ENCODE measurements at regions of chr2 and their contacts with region 1.

Region 1: GRCh38 chr2:127064642-127065250 is 42.2 kb downstream of the BIN1 start:
- DNase-seq: no peak
- ATAC-seq: peak; percentile 89
- H3K4me3 ChIP-seq: no peak overlapping the region
- H3K27ac ChIP-seq: peak overlapping the region; percentile 55; the same call in 1 of the 2 replicates
- H3K4me1 ChIP-seq: peaks cover 11% of the 10 kb centered on the region
- H3K27me3 ChIP-seq: no peaks in the 10 kb centered on the region
- CTCF ChIP-seq: peak in 1 of 3 experiments; percentile 26; a peak in 2 of 6 replicates
- EP300 ChIP-seq: no peak
- POLR2A ChIP-seq: peak; percentile 62
- RAD21 ChIP-seq: 0 out of 2 replicates have a peak, but pooled peaks have one; percentile 3

Region 2: DNA sequence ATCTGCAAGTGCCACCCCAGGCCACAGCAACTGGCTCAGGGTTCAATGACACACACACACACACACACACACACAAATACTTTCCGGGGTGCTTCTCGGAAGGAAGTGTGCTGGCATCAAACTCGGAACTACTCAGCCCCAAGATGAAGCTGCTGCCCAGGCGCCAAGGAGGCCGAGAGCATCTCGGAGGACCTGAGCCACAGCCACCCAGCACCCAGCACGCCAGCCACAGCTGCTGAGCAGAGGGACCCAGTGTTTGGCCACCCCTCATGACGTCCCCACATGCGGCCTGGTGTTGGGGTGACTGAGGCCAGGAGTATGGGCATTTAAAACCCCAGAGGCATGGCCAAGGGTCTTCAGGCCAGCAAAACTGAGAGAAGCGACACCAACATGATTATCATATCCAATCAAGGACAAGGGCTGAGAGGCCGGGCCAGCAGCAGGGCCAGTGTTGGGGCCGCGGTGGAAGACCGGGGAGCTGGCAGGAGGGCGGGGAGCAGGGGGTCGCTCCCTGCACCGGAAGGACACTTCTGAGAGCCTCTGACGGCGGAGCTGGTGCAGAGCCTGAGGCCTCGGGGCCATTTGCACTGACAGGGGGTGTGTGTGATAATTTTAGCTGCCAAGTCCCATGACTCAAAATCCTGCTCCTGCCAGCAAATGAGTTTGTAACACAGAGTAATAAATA is 19.6 kb before region 1 on chr2:
- CTCF ChIA-PET with region 1: no interaction called
- POLR2A ChIA-PET with region 1: no interaction called
- RAD21 ChIA-PET with region 1: no interaction called
- SMC1A ChIA-PET with region 1: no interaction called
- in situ Hi-C with region 1: no loop called
- intact Hi-C with region 1: no loop called
- DNase-seq: no peak
- ATAC-seq: no peak
- H3K4me3 ChIP-seq: no peak overlapping the region
- H3K27ac ChIP-seq: no peak overlapping the region
- H3K4me1 ChIP-seq: peaks cover under 1% of the 10 kb centered on the region
- H3K27me3 ChIP-seq: no peaks in the 10 kb centered on the region
- CTCF ChIP-seq: no peak
- EP300 ChIP-seq: no peak
- POLR2A ChIP-seq: no peak
- RAD21 ChIP-seq: no peak

Region 3: DNA sequence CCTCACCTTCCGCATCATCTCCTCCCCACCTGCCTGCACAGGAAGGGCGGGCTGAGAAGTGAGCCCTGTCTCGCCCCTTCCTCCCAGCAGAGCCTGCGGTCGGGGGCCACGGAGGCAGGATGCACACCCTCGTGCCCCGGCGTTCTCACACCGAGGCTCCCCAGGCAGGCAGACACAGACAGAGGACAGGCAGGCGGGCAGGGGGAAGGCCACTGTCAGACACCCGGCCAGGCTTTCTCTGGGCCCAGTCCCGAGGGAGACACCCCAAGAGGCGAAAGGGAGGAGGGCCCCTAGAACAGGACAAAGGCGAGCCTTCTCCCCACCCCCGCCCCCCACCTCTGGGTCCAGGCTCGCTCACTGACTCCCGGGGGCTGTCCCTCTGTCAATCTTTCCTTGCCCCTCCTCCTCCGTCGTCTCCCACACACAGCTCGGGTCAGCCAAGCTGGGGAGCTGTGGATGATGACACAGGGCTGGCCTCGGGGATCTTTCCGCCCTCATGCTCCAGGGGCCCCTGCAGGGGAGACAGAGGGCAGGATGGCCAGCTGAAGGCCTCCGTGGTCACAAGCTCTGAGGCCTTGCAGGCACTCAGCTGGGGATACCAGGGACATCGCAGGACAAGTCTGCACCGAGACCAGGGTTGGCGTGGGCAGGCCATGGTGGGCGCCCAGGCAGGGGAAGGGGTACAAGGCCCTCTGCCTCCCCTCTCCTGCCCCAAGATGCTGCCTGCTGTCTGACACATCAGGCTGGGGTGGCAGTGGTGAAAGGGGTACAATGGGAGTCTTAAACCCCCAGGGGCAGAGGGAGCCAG is 17.3 kb after region 1 on chr2:
- CTCF ChIA-PET with region 1: interaction called, 20 read pairs
- POLR2A ChIA-PET with region 1: no interaction called
- RAD21 ChIA-PET with region 1: interaction called, 22 read pairs
- SMC1A ChIA-PET with region 1: interaction called, 14 read pairs
- in situ Hi-C with region 1: no loop called
- intact Hi-C with region 1: no loop called
- DNase-seq: no peak
- ATAC-seq: peak; percentile 65
- H3K4me3 ChIP-seq: peak overlapping the region; percentile 60
- H3K27ac ChIP-seq: peak overlapping the region; percentile 75
- H3K4me1 ChIP-seq: peaks cover 47% of the 10 kb centered on the region
- H3K27me3 ChIP-seq: no peaks in the 10 kb centered on the region
- CTCF ChIP-seq: no peak
- EP300 ChIP-seq: 0 out of 4 replicates have a peak, but pooled peaks of 1 of the 2 experiments have one; percentile 4
- POLR2A ChIP-seq: peak; percentile 83
- RAD21 ChIP-seq: no peak

Region 4: GRCh38 chr2:127157651-127158470 is 93.1 kb after region 1 on chr2:
- CTCF ChIA-PET with region 1: interaction called, 3 read pairs
- POLR2A ChIA-PET with region 1: no interaction called
- RAD21 ChIA-PET with region 1: interaction called, 5 read pairs
- SMC1A ChIA-PET with region 1: no interaction called
- in situ Hi-C with region 1: no loop called
- intact Hi-C with region 1: loop called (anchors 5 kb)
- DNase-seq: no peak
- ATAC-seq: peak; percentile 63
- H3K4me3 ChIP-seq: no peak overlapping the region
- H3K27ac ChIP-seq: no peak overlapping the region
- H3K4me1 ChIP-seq: no peaks in the 10 kb centered on the region
- H3K27me3 ChIP-seq: no peaks in the 10 kb centered on the region; a peak in 1 of 4 replicates
- CTCF ChIP-seq: no peak
- EP300 ChIP-seq: no peak
- POLR2A ChIP-seq: no peak
- RAD21 ChIP-seq: no peak

Region 5: GRCh38 chr2:127174136-127174535 is 109.4 kb after region 1 on chr2:
- CTCF ChIA-PET with region 1: interaction called, 35 read pairs
- POLR2A ChIA-PET with region 1: no interaction called
- RAD21 ChIA-PET with region 1: interaction called, 11 read pairs
- SMC1A ChIA-PET with region 1: interaction called, 6 read pairs
- in situ Hi-C with region 1: no loop called
- intact Hi-C with region 1: loop called (anchors 5 kb)
- DNase-seq: no peak
- ATAC-seq: peak; percentile 69
- H3K4me3 ChIP-seq: no peak overlapping the region
- H3K27ac ChIP-seq: no peak overlapping the region
- H3K4me1 ChIP-seq: no peaks in the 10 kb centered on the region
- H3K27me3 ChIP-seq: peaks cover 0 to 4% of the 10 kb centered on the region in 2 experiments; a peak in 3 of 4 replicates
- CTCF ChIP-seq: peak in 2 of 3 experiments; percentile 26 to 43; a peak in 2 of 6 replicates
- EP300 ChIP-seq: no peak
- POLR2A ChIP-seq: no peak
- RAD21 ChIP-seq: peak; percentile 39

Region 6: DNA sequence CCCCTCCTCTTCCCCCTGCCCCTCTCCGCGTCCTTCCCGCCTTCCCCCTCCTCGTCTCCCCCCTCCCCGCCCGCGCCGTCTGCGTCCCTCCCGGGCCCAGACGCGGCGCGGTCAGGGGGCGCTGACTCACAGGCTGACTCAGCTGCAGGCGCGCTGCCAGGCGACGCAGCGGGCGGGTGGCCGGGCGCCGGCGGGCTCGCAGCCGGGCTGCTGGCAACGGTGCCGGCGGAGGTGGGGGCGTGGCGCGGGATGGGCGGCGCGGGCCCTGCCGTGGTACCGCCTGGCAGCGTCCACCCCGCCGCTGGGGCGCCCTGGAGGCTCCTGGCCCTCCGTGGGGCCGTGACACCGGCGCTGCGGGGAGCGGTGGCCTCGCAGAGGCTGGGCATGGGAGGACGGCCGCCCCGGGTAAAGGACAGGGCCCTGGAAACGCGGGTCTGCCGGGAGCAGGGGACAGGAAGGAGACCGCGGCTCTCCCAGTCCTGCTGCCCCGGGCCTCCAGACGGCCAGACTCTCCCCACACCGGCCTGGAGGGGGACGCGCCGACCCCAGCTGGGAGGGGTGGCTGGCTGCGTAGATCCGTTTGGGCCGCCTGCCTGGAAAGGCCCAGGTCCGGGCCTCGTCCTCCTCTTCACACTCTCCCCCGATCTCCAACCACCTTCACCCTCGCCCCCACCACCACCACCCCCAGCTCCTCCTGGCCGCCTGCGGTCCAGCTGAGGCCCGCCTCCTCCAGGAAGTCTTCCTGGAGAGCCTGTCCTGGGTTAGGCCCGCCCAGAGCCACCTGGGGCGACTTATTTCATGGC is 343.5 kb after region 1 on chr2:
- CTCF ChIA-PET with region 1: no interaction called
- POLR2A ChIA-PET with region 1: no interaction called
- RAD21 ChIA-PET with region 1: no interaction called
- SMC1A ChIA-PET with region 1: no interaction called
- in situ Hi-C with region 1: no loop called
- intact Hi-C with region 1: no loop called
- DNase-seq: no peak
- ATAC-seq: peak; percentile 90
- H3K4me3 ChIP-seq: peak overlapping the region; percentile 48
- H3K27ac ChIP-seq: no peak overlapping the region
- H3K4me1 ChIP-seq: peaks cover 19% of the 10 kb centered on the region
- H3K27me3 ChIP-seq: no peaks in the 10 kb centered on the region
- CTCF ChIP-seq: no peak; a peak in 1 of 6 replicates
- EP300 ChIP-seq: no peak
- POLR2A ChIP-seq: peak; percentile 43; the same call in 1 of the 2 replicates
- RAD21 ChIP-seq: 0 out of 2 replicates have a peak, but pooled peaks have one; percentile 9

Measured in GM12878 (cell line).